Activated CD8-positive, alpha-beta memory T cell treated with anti-CD3 and anti-CD28 coated beads, Interleukin-2, amount 10 ng/mL, durations not matched to agents 7 days and 5 days (primary cell): ENCODE measurements at regions of chr2 and their contacts with region 1.

Region 1: GRCh38 chr2:45980161-45980852 is 316.9 kb upstream of the EPAS1 start:
- DNase-seq: no peak
- ATAC-seq: no peak
- H3K4me3 Mint-ChIP-seq: no peak overlapping the region
- H3K27ac Mint-ChIP-seq: no peak overlapping the region
- H3K4me1 Mint-ChIP-seq: peaks cover 12% of the 10 kb centered on the region
- H3K27me3 Mint-ChIP-seq: no peaks in the 10 kb centered on the region

Region 2: GRCh38 chr2:45993476-45993991 is 13.2 kb after region 1 on chr2:
- CTCF ChIA-PET with region 1: interaction called, 15 read pairs
- DNase-seq: peak; percentile 78
- ATAC-seq: peak; percentile 78
- H3K4me3 Mint-ChIP-seq: no peak overlapping the region
- H3K27ac Mint-ChIP-seq: no peak overlapping the region
- H3K4me1 Mint-ChIP-seq: peaks cover 4% of the 10 kb centered on the region
- H3K27me3 Mint-ChIP-seq: no peaks in the 10 kb centered on the region